Left colon (tissue), 2 donors: ENCODE measurements at regions of chr15 and their contacts with region 1.

Region 1: DNA sequence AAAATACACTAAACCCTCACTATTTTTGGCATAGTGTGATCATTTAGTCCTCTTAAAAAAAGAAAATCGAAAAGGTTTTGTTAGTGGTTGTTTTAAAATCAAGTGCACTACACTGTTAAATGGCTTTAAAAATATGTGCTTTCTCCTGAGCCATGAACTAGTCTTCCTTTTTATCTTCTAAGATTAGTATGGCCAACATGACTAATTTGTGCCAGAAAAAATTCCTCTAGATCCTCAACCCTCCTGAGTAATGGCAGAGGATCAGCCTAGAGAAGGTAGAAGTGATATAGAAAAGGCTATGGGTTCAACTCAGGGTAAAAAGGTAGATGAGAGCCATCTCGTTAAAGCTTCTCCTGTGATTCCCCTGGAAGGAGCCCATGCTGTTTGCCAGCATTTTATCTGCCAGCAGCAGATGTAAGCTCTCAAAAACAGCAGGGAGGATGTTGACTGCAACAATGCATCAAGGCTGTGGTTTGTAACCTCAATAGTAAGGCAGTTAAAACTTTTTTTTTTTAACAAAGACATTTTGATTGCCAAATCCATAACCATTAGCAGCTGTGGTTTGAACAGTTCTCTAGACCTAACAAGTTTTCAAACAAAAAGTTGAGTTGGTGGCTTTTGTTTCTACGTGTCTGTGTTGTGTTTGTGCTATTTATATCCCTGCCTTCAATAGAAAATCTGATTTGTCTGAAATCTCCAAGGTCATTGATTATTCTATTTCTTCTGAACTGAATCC is 30.2 kb upstream of the ZNF609 start:
- DNase-seq: no peak
- ATAC-seq: no peak

Region 2: GRCh38 chr15:64651573-64652260 is 221.5 kb after region 1 on chr15:
- intact Hi-C with region 1: loop called in 1 of 2 experiments (anchors 10 kb)
- DNase-seq: no peak
- ATAC-seq: peak; percentile 87